Posterior cingulate gyrus (tissue), 11 donors: ENCODE measurements at regions of chr1 and their contacts with region 1.

Region 1: DNA sequence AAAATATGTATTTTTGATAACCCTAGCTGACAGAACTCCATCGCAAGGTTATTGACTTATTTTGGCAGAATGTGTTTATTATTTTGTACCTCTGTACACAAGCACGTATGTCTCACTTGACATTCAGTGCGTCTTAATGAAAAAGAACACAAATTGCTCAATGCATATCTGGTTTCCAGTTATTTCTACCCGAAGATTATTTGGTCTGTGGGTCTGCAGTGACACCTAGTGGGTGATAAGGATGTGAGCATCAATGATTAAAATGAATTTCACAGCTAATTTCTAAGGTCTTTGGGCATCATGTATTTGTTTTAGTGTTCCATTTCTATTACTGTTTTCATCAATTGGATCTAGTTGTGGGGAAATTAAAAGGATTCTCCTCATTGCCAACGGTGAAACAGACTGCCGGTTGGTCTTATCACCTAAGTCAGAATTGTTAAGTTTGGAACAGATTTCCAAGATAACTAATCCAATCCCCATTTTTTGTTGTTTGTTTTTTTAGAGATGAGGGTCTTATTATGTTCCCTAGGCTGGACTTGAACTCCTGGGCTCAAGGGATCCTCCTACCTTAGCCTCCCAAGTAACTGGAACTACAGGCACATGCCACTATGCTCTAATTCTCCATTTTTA is 13.9 kb downstream of the DDX20 start:
- DNase-seq: peak in 1 of 10 donors; percentile 48

Region 2: DNA sequence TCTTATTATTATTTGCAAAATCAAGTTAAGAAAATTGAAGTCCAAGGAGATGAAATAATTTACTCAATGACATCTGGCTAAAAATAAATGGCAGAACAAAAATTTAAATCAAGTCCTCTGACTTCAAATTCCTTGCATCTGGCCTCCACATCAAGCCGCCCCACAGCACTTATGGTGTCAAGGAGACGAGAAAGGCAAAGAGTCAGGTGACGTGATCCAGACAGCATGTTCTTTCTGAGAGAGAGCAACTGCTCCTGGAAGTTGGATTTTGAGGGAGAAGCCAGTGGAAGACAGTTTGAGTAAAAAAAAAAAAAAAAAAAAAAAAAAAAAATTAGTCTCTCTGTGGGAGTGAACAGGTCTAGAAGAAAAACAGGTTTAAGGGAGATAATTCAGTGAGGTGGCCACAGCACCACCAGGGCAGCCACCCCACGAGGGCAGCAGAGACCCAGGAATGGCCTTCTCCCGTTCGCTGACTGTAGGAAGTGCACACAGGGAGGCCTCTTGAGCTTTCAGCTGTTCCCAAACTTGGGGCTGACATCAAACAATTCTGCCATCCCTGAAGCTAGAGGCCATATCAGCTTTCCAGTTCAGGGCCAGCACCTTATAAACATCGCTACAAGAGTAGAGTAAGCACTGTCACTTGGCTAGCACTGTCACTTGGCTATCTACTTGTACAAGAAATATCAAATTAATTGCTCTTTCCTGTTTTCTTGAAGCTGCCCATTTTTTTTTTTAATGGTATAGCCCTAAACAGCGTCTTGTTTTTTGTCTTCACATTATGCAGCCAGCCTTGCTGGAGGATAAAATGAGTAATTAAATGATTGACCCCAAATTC is 288.0 kb before region 1 on chr1:
- intact Hi-C with region 1: loop called (anchors 1 kb)
- DNase-seq: peak; percentile 53 to 97 (median 81)

Region 3: GRCh38 chr1:111833334-111833733 is 63.7 kb after region 1 on chr1:
- intact Hi-C with region 1: no loop called
- DNase-seq: no peak

Region 4: GRCh38 chr1:111880881-111881837 is 111.5 kb after region 1 on chr1:
- intact Hi-C with region 1: no loop called
- DNase-seq: peak in 4 of 10 donors; percentile 24 to 88 (median 35)